ENCODE measurements at regions of chr17 and their contacts with region 1.

Region 1: DNA sequence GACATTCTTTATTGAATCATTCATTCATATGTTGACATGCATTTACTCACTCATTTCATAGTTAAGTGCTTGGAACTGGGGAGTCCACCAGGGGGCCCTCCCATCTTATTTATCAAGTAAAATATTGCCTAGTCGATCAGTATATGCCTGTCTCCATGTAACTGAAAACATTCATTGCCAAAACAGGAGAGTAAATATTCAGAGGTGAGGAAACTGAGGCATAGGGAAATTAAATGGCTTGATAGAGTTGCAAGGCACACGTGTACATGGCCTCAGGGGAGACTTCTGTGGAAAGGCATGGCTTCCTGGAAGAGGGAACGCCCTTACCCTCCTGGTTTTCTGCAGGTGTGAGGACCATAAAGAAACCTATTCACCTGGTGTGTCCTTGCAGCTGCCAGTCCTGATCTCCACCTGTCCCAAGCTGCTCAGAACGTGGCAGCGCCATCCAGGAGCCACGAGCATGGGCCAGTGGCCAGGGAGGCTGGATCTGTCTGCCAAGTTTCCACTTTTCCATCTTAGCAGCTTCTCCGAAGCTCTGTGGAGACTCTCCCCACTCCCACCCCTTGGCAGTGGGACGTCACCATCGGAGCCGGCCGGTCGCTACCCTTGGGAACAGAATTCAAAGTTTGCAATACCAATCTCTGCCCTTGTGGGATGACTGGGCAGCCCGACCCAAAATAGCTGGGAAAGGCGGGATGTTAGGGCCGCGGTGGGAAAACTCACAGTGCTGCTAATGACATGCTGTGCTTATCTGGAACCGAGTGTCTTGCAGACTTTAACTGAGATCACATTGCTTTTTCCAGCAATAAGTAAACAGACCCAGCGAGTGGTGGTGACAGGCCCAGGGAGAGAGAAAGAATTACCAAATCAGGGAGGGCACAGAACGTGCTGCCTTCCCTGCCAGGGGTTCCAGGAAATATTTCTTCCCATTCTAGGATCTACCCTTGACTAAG is 4.1 kb upstream of the C1QTNF1 start:
- DNase-seq: peak; percentile 53 to 93
- H3K4me3 ChIP-seq: peak overlapping the region in 1 of 2 donors; percentile 26
- H3K27ac ChIP-seq: peak overlapping the region; percentile 86 to 89
- H3K4me1 ChIP-seq: peaks cover 19 to 52% of the 10 kb centered on the region in 2 donors
- H3K27me3 ChIP-seq: no peaks in the 10 kb centered on the region
- CTCF ChIP-seq: peak; percentile 54 to 76 (median 72)

Region 2: GRCh38 chr17:78933959-78934568 is 85.8 kb before region 1 on chr17:
- intact Hi-C with region 1: loop called (anchors 5 kb)
- DNase-seq: peak; percentile 95 to 99
- H3K4me3 ChIP-seq: peak overlapping the region; percentile 17 to 38
- H3K27ac ChIP-seq: peak overlapping the region; percentile 88 to 98
- H3K4me1 ChIP-seq: peaks cover 15 to 40% of the 10 kb centered on the region in 2 donors
- H3K27me3 ChIP-seq: no peaks in the 10 kb centered on the region
- CTCF ChIP-seq: no peak

Region 3: DNA sequence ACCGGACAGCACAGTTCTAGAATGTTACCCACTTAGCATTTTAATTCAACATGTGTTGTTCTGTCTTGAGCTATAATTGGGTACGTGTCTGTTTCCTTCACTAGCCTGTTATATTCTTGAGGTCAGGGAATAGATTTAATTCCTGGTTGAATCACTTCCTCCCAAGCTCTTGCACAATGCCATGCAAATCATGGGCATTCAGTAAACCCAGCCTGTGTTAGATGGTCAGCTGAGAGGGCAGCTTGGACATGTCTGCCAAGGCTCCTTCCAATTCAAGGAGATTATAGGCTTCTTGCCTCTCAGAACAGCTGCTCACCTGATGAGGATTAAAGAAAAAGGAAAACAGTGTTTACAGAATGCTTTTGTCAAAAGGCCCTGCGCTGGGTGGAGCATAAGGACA is 16.7 kb after region 1 on chr17:
- intact Hi-C with region 1: loop called (anchors 2 kb)
- DNase-seq: peak in 1 of 2 donors; percentile 79
- H3K4me3 ChIP-seq: peak overlapping the region in 1 of 2 donors; percentile 14
- H3K27ac ChIP-seq: peak overlapping the region; percentile 65 to 66
- H3K4me1 ChIP-seq: peaks cover 9 to 34% of the 10 kb centered on the region in 2 donors
- H3K27me3 ChIP-seq: no peaks in the 10 kb centered on the region
- CTCF ChIP-seq: no peak

Region 4: GRCh38 chr17:79045842-79046196 is 25.9 kb after region 1 on chr17:
- intact Hi-C with region 1: loop called (anchors 1 kb)
- DNase-seq: peak in 1 of 2 donors; percentile 88
- H3K4me3 ChIP-seq: peak overlapping the region in 1 of 2 donors; percentile 43
- H3K27ac ChIP-seq: peak overlapping the region; percentile 46 to 68
- H3K4me1 ChIP-seq: peaks cover 10 to 17% of the 10 kb centered on the region in 2 donors
- H3K27me3 ChIP-seq: no peaks in the 10 kb centered on the region
- CTCF ChIP-seq: peak; percentile 92 to 98 (median 95)

Region 5: DNA sequence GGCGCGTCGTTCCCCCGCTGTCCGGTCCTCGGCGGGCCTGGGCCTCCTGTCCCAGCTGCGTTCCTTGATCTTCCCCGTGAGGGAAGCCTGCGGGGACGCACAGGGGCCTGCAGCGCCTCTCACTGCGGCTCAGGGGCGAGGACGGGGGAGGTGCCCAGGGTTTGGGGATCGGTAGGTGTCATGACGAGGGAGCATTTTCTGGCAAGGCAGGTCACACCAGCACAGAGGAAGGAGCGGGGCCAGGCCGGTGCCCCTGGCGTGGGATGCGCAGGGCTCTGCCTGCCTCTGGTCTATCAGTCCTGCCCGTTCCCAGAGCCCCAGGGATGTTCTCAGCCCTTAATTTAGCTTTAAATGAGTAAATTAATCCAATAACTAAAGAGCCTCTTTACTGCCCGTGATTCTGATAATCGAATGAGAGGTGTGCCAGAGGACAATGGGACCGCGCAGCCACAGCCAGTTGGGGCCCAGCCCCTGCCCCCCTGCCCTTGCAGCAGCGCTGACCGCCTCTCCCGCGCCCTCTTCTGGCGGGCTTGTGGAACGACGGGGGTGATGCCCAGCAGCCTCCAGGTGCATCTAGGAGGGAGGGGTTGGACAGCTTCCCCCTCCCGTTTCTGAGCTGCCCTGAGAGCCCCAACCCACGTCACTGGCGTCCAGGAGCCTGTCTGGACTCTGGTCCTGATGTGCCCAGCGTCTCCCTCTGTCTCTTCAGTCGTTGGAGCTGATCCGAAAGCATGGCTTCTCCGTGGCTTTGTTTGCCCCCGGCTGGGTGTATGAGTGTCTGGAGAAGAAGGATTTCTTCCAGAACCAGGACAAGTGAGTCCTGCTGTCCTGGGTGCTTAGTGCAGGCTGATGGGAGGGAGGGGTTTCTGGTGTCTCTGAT is 62.6 kb after region 1 on chr17:
- intact Hi-C with region 1: loop called (anchors 2 kb)
- DNase-seq: no peak
- H3K4me3 ChIP-seq: no peak overlapping the region
- H3K27ac ChIP-seq: no peak overlapping the region
- H3K4me1 ChIP-seq: no peaks in the 10 kb centered on the region
- H3K27me3 ChIP-seq: no peaks in the 10 kb centered on the region
- CTCF ChIP-seq: peak; percentile 73 to 89 (median 83)

Region 6: DNA sequence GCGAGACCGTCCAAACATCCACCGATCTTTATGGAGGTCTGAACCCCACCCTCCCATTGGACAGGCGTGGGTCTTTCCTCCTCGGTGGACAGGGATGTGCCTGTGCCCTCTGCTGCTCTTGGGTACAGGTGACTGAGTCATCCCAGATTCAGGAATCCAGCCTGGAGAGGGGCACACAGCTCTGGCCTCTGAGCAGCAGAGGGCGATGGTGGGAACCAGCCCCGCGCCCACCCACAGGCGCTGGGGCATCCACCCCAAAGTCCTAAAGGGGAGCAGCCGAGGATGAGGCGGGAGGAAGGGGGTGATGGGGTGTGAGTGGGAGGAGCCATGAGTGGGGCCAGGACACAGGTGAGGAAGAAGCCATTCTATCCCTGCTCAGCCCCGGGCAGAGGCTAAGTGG is 89.7 kb after region 1 on chr17:
- intact Hi-C with region 1: no loop called
- DNase-seq: no peak
- H3K4me3 ChIP-seq: no peak overlapping the region
- H3K27ac ChIP-seq: no peak overlapping the region
- H3K4me1 ChIP-seq: peaks cover 3 to 4% of the 10 kb centered on the region in 2 donors
- H3K27me3 ChIP-seq: no peaks in the 10 kb centered on the region
- CTCF ChIP-seq: no peak

Region 7: GRCh38 chr17:79305768-79306423 is 286.0 kb after region 1 on chr17:
- intact Hi-C with region 1: loop called (anchors 10 kb)
- DNase-seq: peak; percentile 19 to 80
- H3K4me3 ChIP-seq: peak overlapping the region; percentile 22 to 41
- H3K27ac ChIP-seq: peak overlapping the region; percentile 77 to 81
- H3K4me1 ChIP-seq: peaks cover 12 to 26% of the 10 kb centered on the region in 2 donors
- H3K27me3 ChIP-seq: no peaks in the 10 kb centered on the region
- CTCF ChIP-seq: peak in 1 of 3 experiments; percentile 5

Region 8: DNA sequence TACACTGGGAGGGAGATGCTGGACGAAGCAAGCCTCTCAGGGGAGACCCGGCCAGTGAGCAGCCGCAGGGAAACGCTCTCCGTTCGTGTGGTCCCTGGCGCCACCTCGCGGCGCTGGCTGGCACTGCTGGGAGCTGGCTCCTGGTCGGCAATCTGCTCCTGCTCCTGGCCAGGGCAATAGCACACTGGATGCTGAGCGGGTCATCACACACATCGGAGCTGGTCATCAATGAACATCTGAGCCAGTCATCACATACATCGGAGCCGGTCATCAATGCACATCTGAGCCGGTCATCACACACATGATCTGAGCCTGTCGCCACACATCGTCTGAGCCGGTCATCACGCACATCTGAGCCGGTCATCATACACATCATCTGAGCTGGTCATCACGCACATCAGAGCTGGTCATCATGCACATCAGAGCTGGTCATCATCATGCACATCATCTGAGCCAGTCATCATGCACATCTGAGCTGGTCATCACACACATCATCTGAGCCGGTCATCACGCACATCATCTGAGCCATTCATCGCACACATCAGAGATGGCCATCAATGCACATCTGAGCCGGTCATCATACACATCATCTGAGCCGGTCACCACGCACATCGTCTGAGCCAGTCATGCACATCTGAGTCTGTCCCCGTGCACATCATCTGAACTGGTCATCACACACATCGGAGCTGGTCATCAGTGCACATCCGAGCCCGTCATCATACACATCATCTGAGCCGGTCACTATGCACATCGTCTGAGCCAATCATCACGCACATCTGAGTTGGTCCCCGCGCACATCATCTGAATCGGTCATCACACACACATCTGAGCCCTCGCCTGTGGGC is 373.7 kb after region 1 on chr17:
- intact Hi-C with region 1: loop called (anchors 2 kb)
- DNase-seq: peak in 1 of 2 donors; percentile 85
- H3K4me3 ChIP-seq: no peak overlapping the region
- H3K27ac ChIP-seq: no peak overlapping the region
- H3K4me1 ChIP-seq: no peaks in the 10 kb centered on the region
- H3K27me3 ChIP-seq: peaks cover 7% of the 10 kb centered on the region
- CTCF ChIP-seq: peak; percentile 90 to 93 (median 91)